GM13976 (cell line): ENCODE measurements at regions of chr14 and their contacts with region 1.

Region 1: GRCh38 chr14:88179716-88180115 is 143.4 kb downstream of the KCNK10 start:
- DNase-seq: no peak
- CTCF ChIP-seq: no peak

Region 2: GRCh38 chr14:87944987-87945604 is 234.6 kb before region 1 on chr14:
- in situ Hi-C with region 1: loop called (anchors 10 kb)
- DNase-seq: no peak
- CTCF ChIP-seq: peak; percentile 31